ENCODE measurements at regions of chr11 and their contacts with region 1.

Region 1: DNA sequence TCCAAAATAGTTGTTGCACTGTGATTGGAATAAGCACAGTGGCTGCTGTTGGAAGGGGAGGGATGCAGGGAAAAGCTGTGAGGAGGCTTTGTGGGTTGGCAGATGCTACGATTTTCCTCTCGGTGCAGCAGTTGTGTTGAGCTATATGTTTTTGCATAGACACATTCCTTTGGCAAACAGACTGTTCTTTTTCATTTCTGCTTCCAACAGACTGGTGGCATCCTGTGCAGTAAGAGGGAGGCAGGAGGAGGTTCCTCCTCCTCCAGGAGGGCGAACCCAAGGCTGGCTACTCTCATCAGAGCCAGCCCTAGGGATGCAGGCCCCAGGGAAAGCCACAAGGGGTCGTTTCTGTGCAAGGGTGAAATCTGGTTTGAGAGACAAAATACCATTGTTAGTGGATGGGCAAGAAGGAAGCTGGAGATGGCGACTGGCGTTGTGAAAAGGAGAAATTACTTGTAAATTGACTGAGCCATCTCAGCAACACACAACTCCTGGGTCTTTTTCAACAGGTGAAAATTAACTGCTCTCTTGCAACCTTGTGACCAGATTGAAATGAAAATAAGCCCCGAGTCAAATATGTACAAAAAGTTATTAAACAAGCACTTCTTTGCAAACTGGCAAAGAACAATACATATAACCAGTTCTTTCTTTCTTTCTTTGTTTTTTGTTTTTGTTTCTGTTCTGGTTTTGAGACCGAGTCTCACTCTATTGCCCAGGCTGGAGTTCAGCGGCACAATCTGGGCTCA is 26.5 kb upstream of the UBASH3B start:
- DNase-seq: peak; percentile 89
- H3K4me3 ChIP-seq: no peak overlapping the region
- H3K27ac ChIP-seq: no peak overlapping the region
- H3K4me1 ChIP-seq: no peaks in the 10 kb centered on the region
- H3K27me3 ChIP-seq: no peaks in the 10 kb centered on the region
- CTCF ChIP-seq: peak; percentile 93

Region 2: GRCh38 chr11:122618927-122619326 is 10.1 kb before region 1 on chr11:
- CTCF ChIA-PET with region 1: no interaction called
- POLR2A ChIA-PET with region 1: no interaction called
- intact Hi-C with region 1: no loop called
- DNase-seq: no peak
- H3K4me3 ChIP-seq: no peak overlapping the region
- H3K27ac ChIP-seq: no peak overlapping the region
- H3K4me1 ChIP-seq: no peaks in the 10 kb centered on the region
- H3K27me3 ChIP-seq: no peaks in the 10 kb centered on the region
- CTCF ChIP-seq: no peak

Region 3: DNA sequence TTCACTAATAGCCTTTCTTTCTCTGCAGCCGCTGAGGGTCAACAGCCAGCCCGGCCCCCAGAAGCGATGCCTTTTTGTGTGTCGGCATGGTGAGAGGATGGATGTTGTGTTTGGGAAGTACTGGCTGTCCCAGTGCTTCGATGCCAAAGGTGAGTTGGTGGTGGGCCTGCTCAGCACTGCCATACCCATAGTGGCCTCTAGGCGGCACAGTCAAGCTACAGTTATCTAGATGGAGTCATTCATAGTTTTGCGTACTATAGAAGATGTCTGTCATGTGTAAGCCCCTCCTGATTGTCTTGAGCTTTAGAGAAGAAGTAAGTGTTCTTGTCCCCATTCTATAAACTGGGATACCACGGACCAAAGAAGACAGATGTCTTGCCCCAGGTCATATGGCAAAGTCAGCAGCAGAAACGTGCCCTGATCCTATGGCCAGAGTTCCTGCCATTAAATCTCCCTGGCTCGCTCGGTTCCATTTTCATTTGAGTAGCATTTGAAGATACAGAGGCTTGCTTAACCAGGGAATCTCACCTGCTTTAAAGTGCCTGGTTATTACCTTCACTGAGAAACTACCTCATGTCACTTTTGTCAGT is 167.2 kb after region 1 on chr11:
- CTCF ChIA-PET with region 1: interaction called, 4 read pairs
- POLR2A ChIA-PET with region 1: no interaction called
- intact Hi-C with region 1: loop called (anchors 5 kb)
- DNase-seq: peak; percentile 79
- H3K4me3 ChIP-seq: no peak overlapping the region
- H3K27ac ChIP-seq: no peak overlapping the region
- H3K4me1 ChIP-seq: no peaks in the 10 kb centered on the region
- H3K27me3 ChIP-seq: no peaks in the 10 kb centered on the region
- CTCF ChIP-seq: peak; percentile 98

Measured in A673 (cell line).